ENCODE measurements at regions of chr19 and their contacts with region 1.

Region 1: GRCh38 chr19:6199240-6199983 is 63.9 kb downstream of the ACSBG2 start:
- DNase-seq: peak; percentile 97 to 100 (median 99)
- ATAC-seq: peak; percentile 93
- H3K4me3 ChIP-seq: peak overlapping the region; percentile 97
- H3K4me3 Mint-ChIP-seq: peak overlapping the region; percentile 92 to 99 (median 95)
- H3K27ac ChIP-seq: peak overlapping the region; percentile 70
- H3K27ac Mint-ChIP-seq: peak overlapping the region; percentile 89 to 97 (median 91)
- H3K4me1 ChIP-seq: peaks cover 6% of the 10 kb centered on the region in 2 donors
- H3K4me1 Mint-ChIP-seq: peaks cover 5 to 20% (median 18%) of the 10 kb centered on the region in 7 donors
- H3K27me3 ChIP-seq: no peaks in the 10 kb centered on the region
- H3K27me3 Mint-ChIP-seq: peaks cover 0 to 8% (median 4%) of the 10 kb centered on the region in 5 donors

Region 2: GRCh38 chr19:6218491-6219162 is 19.2 kb after region 1 on chr19:
- CTCF ChIA-PET with region 1: interaction called, 14 read pairs
- POLR2A ChIA-PET with region 1: interaction called, 3 read pairs
- intact Hi-C with region 1: no loop called
- DNase-seq: peak; percentile 63 to 85 (median 76)
- ATAC-seq: peak; percentile 86
- H3K4me3 ChIP-seq: no peak overlapping the region
- H3K4me3 Mint-ChIP-seq: no peak overlapping the region
- H3K27ac ChIP-seq: no peak overlapping the region
- H3K27ac Mint-ChIP-seq: peak overlapping the region in 3 of 9 donors; percentile 10 to 78 (median 35)
- H3K4me1 ChIP-seq: no peaks in the 10 kb centered on the region
- H3K4me1 Mint-ChIP-seq: peaks cover 0 to 4% (median 0%) of the 10 kb centered on the region in 7 donors
- H3K27me3 ChIP-seq: no peaks in the 10 kb centered on the region
- H3K27me3 Mint-ChIP-seq: no peaks in the 10 kb centered on the region

Region 3: DNA sequence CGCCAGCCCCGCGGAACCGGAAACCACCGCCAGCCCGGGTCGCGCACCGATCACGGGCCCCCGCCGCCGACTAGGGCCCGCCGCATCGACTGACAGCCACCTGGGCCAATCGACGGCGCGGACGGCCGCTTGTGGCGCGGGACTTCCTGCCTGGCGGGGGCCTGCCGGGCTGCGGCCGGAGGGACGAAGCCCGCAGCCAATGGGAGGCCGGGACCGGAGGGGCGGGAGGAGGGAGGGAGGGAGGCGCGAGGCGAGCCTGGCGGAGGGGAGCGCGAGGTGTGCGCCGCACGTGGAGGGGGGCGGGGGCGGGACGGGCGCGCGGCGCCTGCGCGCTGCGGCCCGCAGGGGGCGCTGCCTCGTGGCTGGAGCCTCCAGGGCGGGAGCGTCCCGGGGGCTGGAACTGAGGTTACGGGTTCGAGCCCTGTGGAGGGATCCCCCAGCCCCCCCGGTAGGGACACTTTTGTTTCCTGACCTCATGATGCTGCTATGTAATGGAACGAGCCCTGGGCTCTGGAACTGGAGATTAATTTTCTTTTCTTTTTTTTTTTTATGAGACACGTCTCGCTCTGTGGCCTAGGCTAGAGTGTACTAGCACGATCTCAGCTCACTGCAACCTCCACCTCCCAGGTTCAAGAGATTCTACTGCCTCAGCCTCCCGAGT is 80.6 kb after region 1 on chr19 and contains the start of gene MLLT1:
- CTCF ChIA-PET with region 1: no interaction called
- POLR2A ChIA-PET with region 1: no interaction called
- intact Hi-C with region 1: loop called (anchors 1 kb)
- DNase-seq: peak; percentile 88 to 98 (median 90)
- ATAC-seq: peak; percentile 96
- H3K4me3 ChIP-seq: peak within 1 kb of the TSS; percentile 54
- H3K4me3 Mint-ChIP-seq: peak within 1 kb of the TSS; percentile 85 to 97 (median 92)
- H3K27ac ChIP-seq: peak within 1 kb of the TSS; percentile 78
- H3K27ac Mint-ChIP-seq: peak within 1 kb of the TSS; percentile 87 to 95 (median 93)
- H3K4me1 ChIP-seq: peaks cover 3 to 20% of the 10 kb centered on the region in 2 donors
- H3K4me1 Mint-ChIP-seq: peaks cover 30 to 42% (median 39%) of the 10 kb centered on the region in 7 donors
- H3K27me3 ChIP-seq: no peaks in the 10 kb centered on the region
- H3K27me3 Mint-ChIP-seq: peaks cover 0 to 6% (median 0%) of the 10 kb centered on the region in 5 donors
- total RNA-seq, gene MLLT1: 33.3 to 47.5 (median 39.0) TPM

Region 4: GRCh38 chr19:6340493-6341201 is 141.2 kb after region 1 on chr19:
- CTCF ChIA-PET with region 1: no interaction called
- POLR2A ChIA-PET with region 1: no interaction called
- intact Hi-C with region 1: no loop called
- DNase-seq: no peak
- ATAC-seq: no peak
- H3K4me3 ChIP-seq: no peak overlapping the region
- H3K4me3 Mint-ChIP-seq: no peak overlapping the region
- H3K27ac ChIP-seq: no peak overlapping the region
- H3K27ac Mint-ChIP-seq: no peak overlapping the region
- H3K4me1 ChIP-seq: no peaks in the 10 kb centered on the region
- H3K4me1 Mint-ChIP-seq: peaks cover 0 to 6% (median 0%) of the 10 kb centered on the region in 7 donors
- H3K27me3 ChIP-seq: no peaks in the 10 kb centered on the region
- H3K27me3 Mint-ChIP-seq: no peaks in the 10 kb centered on the region

Region 5: DNA sequence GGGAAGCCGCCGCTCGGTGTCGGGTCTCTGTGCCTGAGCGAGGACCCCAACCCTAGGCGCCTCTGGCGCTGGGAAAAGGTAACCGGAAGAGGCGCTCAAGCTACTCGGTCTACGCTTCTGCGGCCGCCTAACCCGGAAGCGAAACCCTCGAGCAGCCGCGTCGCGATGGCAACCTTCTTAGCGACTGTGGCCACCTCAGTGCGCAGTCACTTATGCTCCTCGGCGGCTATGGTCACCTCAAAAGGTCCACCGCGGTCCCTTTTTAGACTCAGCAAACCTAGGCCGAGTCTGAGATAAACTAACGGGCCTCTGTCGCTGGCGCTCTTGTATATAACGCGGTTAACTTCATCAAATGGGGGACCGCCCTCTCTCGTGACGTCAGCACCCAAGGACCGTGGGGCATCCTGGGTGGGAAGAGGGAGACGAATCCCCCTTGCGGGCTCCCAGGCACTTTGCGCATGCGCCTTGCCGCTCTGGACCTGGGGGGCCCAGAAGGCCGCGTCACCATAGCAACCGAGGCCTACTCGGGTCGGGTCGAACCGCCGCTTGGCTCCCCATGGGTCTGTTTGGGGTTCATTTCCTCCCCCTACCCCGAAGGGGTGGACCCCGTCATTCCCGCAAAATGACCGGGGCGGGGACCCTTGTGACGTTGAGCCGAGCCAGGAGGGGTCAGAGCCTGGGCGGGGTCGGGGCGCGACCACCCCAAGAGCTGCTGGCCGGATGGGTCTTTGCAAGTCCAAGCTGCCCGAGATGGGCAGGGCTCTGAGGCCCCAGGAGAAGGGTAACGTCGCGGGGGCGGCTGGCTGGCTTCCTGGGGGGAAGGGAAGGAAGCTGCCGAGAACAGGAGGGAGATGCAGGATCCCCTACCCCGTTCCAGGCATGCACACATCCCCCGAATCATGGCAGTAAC is 193.9 kb after region 1 on chr19 and contains the start of gene GTF2F1:
- CTCF ChIA-PET with region 1: no interaction called
- POLR2A ChIA-PET with region 1: no interaction called
- intact Hi-C with region 1: loop called in 1 of 2 experiments (anchors 1 kb)
- DNase-seq: peak; percentile 87 to 96 (median 92)
- ATAC-seq: peak; percentile 88
- H3K4me3 ChIP-seq: peak within 1 kb of the TSS; percentile 81
- H3K4me3 Mint-ChIP-seq: peak within 1 kb of the TSS; percentile 90 to 95 (median 94)
- H3K27ac ChIP-seq: peak within 1 kb of the TSS; percentile 98
- H3K27ac Mint-ChIP-seq: peak within 1 kb of the TSS; percentile 95 to 99 (median 97)
- H3K4me1 ChIP-seq: peaks cover 8 to 12% of the 10 kb centered on the region in 2 donors
- H3K4me1 Mint-ChIP-seq: peaks cover 20 to 27% (median 25%) of the 10 kb centered on the region in 7 donors
- H3K27me3 ChIP-seq: no peaks in the 10 kb centered on the region
- H3K27me3 Mint-ChIP-seq: no peaks in the 10 kb centered on the region
- total RNA-seq, gene GTF2F1: 51.5 to 71.6 (median 61.3) TPM